Activated T-helper 2 cell treated with anti-CD3 and anti-CD28 coated beads, Interferon-gamma antibody, Interleukin-2, Interleukin-4, amounts not matched to agents 10 μg/mL and 5 μg/mL and 100 μg/mL, durations not matched to agents 14 hours and 24 hours and 36 hours (primary cell): ENCODE measurements at regions of chr9 and their contacts with region 1.

Region 1: DNA sequence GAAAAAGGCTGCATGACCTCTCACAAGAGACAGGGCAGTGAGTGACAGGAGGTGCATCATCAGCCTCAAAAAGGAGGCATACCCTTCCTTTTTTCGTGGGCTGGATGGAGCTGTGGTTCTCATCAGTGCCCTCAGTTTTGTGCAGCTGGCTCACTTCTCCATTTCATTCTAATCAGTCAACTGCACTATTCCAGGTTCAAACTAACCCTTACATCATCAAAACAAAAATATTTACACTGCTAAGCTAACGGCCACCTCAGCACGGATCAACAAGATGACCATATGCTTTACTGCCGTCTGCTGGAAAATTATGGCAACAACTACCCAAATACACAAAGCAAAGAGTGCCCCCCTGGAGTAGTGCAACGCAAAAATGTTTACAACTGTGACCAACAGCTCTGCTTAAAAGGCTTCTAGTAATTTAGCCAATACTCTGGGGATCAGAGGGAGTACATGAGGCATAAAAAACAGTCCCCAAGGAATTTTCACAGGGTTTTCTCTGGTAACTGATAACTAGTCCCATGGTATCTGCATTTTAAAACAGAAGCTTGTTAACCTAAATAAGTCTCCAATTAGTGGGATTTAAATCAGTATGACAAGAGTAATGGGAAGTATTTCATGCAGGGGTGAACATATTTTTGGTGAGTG is 10.8 kb downstream of the KCNV2 start:
- DNase-seq: no peak
- H3K4me3 Mint-ChIP-seq: no peak overlapping the region
- H3K27ac Mint-ChIP-seq: no peak overlapping the region
- H3K4me1 Mint-ChIP-seq: peaks cover 5% of the 10 kb centered on the region
- H3K27me3 Mint-ChIP-seq: no peaks in the 10 kb centered on the region

Region 2: DNA sequence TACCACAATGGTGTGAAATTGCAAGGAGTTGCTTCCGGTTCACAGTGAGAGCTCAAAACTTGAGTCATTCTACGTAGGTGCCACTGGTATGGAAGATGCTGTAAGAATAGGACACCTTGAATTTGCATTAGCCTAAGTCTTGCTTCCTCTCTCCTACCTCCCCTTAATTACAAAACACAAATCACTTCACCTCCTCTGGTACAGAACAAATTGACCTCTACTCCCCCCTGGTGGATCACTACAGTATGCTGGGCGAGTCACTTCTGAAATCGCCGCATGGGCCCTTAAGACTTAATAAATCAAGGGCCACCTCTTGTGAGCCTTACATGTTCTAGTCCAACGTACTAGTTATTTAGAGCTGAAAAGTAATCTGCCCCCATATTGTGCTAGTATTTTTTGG is 858.2 kb before region 1 on chr9:
- intact Hi-C with region 1: loop called (anchors 10 kb)
- DNase-seq: no peak
- H3K4me3 Mint-ChIP-seq: no peak overlapping the region
- H3K27ac Mint-ChIP-seq: no peak overlapping the region
- H3K4me1 Mint-ChIP-seq: no peaks in the 10 kb centered on the region
- H3K27me3 Mint-ChIP-seq: peaks cover 61% of the 10 kb centered on the region

Region 3: GRCh38 chr9:2132484-2133082 is 595.5 kb before region 1 on chr9:
- intact Hi-C with region 1: loop called (anchors 5 kb)
- DNase-seq: no peak
- H3K4me3 Mint-ChIP-seq: no peak overlapping the region
- H3K27ac Mint-ChIP-seq: no peak overlapping the region
- H3K4me1 Mint-ChIP-seq: peaks cover 7% of the 10 kb centered on the region
- H3K27me3 Mint-ChIP-seq: no peaks in the 10 kb centered on the region

Region 4: DNA sequence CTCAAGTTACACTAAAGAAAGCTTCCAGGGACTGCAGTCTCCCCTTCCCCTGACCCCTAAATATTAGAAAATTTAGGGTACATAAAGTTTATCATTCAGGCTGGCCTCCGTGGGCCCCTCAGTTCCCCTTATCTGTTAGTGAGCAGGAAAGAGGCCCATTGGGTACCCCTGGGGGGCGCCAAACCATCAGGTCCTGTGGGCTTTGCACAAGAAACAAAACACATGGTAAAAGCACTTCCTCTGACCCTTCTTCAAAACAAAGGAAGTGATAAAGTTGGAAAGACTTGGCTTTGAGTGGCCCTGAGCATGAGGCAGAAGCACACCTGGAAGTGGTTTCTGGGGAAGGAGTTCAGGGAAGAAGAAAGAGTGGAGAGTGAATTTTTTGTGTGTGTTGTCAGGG is 500.0 kb before region 1 on chr9:
- intact Hi-C with region 1: loop called (anchors 10 kb)
- DNase-seq: no peak
- H3K4me3 Mint-ChIP-seq: no peak overlapping the region
- H3K27ac Mint-ChIP-seq: no peak overlapping the region
- H3K4me1 Mint-ChIP-seq: no peaks in the 10 kb centered on the region
- H3K27me3 Mint-ChIP-seq: no peaks in the 10 kb centered on the region

Region 5: GRCh38 chr9:2469681-2470221 is 258.3 kb before region 1 on chr9:
- intact Hi-C with region 1: loop called (anchors 10 kb)
- DNase-seq: no peak
- H3K4me3 Mint-ChIP-seq: no peak overlapping the region
- H3K27ac Mint-ChIP-seq: no peak overlapping the region
- H3K4me1 Mint-ChIP-seq: peaks cover 2% of the 10 kb centered on the region
- H3K27me3 Mint-ChIP-seq: peaks cover 5% of the 10 kb centered on the region

Region 6: GRCh38 chr9:2620919-2621679 is 107.0 kb before region 1 on chr9:
- intact Hi-C with region 1: loop called (anchors 2 kb)
- DNase-seq: peak; percentile 47
- H3K4me3 Mint-ChIP-seq: peak overlapping the region; percentile 87
- H3K27ac Mint-ChIP-seq: peak overlapping the region; percentile 83
- H3K4me1 Mint-ChIP-seq: peaks cover 27% of the 10 kb centered on the region
- H3K27me3 Mint-ChIP-seq: peaks cover 30% of the 10 kb centered on the region